Right ventricle myocardium inferior (tissue), 1 donor: ENCODE measurements at regions of chr13 and their contacts with region 1.

Region 1: DNA sequence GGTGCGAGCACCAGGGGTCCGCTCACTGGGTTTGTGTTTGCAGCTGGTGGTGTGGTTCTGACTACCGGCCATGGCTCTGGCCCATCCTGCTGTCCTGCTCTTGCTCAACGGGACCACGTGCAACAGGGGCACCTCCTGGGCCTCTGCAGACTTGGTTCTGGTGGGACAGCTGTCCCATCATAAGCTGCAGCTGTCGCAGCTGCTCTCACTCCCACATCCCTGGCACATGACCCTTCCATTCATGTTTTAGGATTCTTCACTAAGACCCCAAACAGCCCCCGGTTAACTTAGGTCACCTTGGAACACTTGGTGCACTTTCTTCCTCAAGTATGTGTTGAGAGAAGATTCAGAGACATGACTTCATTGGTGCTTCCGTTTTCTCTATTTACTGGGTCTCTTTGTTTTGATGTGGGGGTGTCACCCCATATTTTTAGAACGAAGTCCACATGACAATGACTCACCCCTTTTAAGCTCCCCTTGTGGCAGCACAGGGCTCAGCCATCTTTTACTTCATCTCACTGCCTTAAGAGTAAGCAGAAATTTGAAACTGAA is 68.4 kb upstream of the ARHGEF7 start:
- DNase-seq: no peak
- ATAC-seq: no peak

Region 2: GRCh38 chr13:110593430-110594130 is 453.1 kb before region 1 on chr13:
- intact Hi-C with region 1: loop called (anchors 5 kb)
- DNase-seq: no peak
- ATAC-seq: peak; percentile 80

Region 3: DNA sequence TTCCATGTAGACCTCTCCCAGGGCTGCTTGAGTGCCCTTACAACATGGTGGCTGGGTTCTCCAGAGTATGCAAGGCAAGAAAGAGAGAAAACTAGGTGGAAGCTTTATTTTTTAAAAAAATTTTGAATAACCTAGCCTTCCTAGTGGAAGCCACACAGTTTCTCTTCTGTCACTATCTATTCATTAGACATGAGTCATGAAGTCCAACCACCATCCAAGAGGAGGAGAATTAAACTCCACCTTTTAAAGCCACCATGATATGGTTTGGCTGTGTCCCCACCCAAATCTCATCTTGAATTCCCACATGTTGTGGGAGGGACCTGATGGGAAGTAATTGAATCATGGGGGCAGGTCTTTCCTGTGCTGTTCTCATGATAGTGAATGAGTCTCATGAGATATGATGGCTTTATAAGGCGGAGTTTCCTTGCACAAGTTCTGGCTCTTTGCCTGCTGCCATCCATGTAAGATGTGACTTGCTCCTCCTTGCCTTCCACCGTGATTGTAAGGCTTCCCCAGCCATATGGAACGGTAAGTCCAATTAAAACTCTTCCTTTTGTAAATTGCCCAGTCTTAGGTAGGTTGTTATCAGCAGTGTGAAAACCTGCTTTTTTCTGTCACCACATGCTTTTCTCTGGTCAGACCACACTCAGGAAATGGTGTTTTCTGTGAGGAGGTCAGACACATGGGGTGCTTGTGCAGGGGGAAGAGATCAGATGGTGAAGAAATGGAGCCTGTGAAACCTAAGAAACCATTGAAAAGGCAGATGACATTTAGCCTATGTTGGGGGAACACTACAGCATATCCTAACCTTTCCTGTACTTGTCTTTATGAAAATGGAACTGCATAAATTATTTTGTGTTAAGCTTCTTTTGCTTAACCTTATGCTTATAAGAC is 189.5 kb before region 1 on chr13:
- intact Hi-C with region 1: loop called (anchors 10 kb)
- DNase-seq: no peak
- ATAC-seq: no peak